ENCODE measurements at regions of chr7 and their contacts with region 1.

Region 1: GRCh38 chr7:132580717-132581285 is 4.5 kb upstream of the PLXNA4 start:
- DNase-seq: peak; percentile 76
- H3K4me3 Mint-ChIP-seq: no peak overlapping the region
- H3K27ac Mint-ChIP-seq: no peak overlapping the region
- H3K4me1 Mint-ChIP-seq: peaks cover 2% of the 10 kb centered on the region
- H3K27me3 Mint-ChIP-seq: peaks cover 31% of the 10 kb centered on the region

Region 2: DNA sequence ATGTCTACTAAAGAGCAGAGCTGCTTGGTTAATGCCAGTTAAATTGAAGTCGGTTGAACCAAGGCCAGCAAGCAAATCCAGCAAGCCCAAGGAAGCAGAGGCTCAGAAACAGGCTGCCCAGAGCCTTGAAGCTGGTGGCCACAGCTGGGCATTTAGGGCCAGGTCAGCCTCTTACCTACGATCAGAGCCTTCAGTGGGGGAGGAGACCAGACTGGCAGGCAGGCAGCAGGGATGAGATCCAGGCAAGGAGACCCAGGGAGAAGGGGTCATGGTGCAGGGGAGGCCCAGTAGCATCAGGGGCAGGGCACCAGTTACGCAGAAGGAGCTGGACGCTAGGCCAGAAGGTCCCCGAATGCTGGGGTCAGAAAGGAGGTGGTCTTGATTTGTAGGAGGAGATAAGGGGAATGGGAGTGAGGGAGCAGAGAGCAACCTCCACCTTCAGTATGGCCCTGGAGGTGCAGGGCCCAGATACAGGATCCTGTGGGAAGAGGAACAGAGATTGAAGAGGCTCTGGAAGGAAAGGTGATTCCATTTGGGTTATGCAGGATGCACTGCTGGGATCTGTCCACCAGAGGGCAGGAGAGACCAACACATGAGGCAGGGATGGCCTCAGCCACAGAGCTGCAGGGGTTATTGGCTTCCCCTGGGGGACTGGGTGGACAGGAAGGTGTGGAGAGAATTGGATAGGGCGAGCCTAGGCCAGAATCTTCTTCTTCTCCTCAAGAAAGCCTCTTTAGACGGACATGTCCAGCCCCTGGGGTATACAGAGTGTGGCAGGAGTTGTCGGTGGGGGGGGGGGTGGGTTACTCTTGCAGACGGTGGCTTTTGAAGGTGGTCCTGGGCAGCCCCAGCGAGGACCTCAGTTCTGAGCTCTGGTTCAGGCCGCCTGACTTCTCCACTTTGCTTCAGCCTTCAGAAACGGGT is 891.8 kb before region 1 on chr7:
- CTCF ChIA-PET with region 1: interaction called, 9 read pairs
- POLR2A ChIA-PET with region 1: no interaction called
- intact Hi-C with region 1: loop called (anchors 5 kb)
- DNase-seq: peak; percentile 69
- H3K4me3 Mint-ChIP-seq: no peak overlapping the region
- H3K27ac Mint-ChIP-seq: no peak overlapping the region
- H3K4me1 Mint-ChIP-seq: no peaks in the 10 kb centered on the region
- H3K27me3 Mint-ChIP-seq: peaks cover 42% of the 10 kb centered on the region

Region 3: DNA sequence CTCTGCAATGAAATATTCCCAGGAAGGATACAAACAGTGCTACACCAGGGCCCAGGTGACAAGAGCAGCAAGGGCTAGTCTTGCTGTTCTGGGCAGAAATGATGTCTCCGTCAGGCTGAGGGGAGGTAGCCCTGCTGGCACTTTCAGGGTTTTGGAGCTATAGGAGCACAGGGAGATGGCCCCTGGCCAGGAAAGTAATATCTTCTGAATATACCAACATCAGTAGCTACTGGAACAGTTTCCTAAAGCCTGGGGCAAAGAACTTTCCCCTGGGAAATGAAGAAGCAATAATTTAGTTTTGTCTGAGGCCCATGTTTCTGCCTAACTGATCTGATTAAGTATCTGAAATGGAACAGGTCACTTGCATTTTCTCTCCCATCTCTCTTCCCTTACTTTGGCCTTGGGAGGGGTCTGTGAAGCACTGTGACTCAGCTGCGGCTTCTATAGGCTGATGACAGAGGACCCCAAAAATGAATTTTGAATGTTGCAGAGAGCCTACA is 535.3 kb before region 1 on chr7:
- CTCF ChIA-PET with region 1: no interaction called
- POLR2A ChIA-PET with region 1: no interaction called
- intact Hi-C with region 1: no loop called
- DNase-seq: no peak
- H3K4me3 Mint-ChIP-seq: no peak overlapping the region
- H3K27ac Mint-ChIP-seq: no peak overlapping the region
- H3K4me1 Mint-ChIP-seq: no peaks in the 10 kb centered on the region
- H3K27me3 Mint-ChIP-seq: peaks cover 4% of the 10 kb centered on the region

Region 4: GRCh38 chr7:132394283-132395198 is 186.3 kb before region 1 on chr7:
- CTCF ChIA-PET with region 1: interaction called, 95 read pairs
- POLR2A ChIA-PET with region 1: no interaction called
- intact Hi-C with region 1: loop called (anchors 1 kb)
- DNase-seq: peak; percentile 12
- H3K4me3 Mint-ChIP-seq: no peak overlapping the region
- H3K27ac Mint-ChIP-seq: no peak overlapping the region
- H3K4me1 Mint-ChIP-seq: no peaks in the 10 kb centered on the region
- H3K27me3 Mint-ChIP-seq: no peaks in the 10 kb centered on the region

Region 5: DNA sequence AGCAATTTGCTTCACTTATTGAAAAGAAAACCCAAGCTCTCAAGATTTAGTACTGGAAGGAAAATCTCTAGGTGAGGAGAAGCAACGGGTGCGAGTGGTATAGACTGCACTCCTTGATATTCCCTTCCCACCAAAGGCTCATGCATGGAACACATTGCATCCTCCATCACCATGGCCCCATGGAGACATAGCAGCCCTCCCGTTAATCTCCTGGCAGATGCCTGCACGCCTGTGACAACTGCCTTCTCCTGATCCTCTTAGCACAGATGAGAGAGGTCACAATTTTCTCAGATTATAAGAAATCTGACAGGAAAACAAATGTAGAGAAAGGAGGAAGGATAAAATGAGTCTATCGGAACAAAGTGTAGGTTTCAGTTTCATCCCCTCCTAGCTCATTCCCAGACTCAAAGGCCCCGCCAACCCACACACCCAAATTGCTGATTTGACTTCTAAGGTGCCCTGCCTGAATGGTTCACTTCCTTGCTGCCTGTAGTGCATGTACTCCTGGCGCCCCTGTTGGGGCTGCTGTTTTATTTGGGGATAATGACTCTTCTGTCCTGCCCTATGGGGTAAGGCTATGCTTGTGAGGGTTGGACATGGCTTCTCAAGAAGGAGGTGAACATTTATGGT is 54.6 kb before region 1 on chr7:
- CTCF ChIA-PET with region 1: interaction called, 3 read pairs
- POLR2A ChIA-PET with region 1: no interaction called
- intact Hi-C with region 1: loop called (anchors 5 kb)
- DNase-seq: peak; percentile 71
- H3K4me3 Mint-ChIP-seq: no peak overlapping the region
- H3K27ac Mint-ChIP-seq: peak overlapping the region; percentile 29
- H3K4me1 Mint-ChIP-seq: peaks cover 25% of the 10 kb centered on the region
- H3K27me3 Mint-ChIP-seq: peaks cover 7% of the 10 kb centered on the region

Region 6: GRCh38 chr7:132568962-132569361 is 11.8 kb before region 1 on chr7:
- CTCF ChIA-PET with region 1: interaction called, 17 read pairs
- POLR2A ChIA-PET with region 1: no interaction called
- intact Hi-C with region 1: no loop called
- DNase-seq: no peak
- H3K4me3 Mint-ChIP-seq: no peak overlapping the region
- H3K27ac Mint-ChIP-seq: no peak overlapping the region
- H3K4me1 Mint-ChIP-seq: peaks cover 5% of the 10 kb centered on the region
- H3K27me3 Mint-ChIP-seq: peaks cover 55% of the 10 kb centered on the region

Region 7: DNA sequence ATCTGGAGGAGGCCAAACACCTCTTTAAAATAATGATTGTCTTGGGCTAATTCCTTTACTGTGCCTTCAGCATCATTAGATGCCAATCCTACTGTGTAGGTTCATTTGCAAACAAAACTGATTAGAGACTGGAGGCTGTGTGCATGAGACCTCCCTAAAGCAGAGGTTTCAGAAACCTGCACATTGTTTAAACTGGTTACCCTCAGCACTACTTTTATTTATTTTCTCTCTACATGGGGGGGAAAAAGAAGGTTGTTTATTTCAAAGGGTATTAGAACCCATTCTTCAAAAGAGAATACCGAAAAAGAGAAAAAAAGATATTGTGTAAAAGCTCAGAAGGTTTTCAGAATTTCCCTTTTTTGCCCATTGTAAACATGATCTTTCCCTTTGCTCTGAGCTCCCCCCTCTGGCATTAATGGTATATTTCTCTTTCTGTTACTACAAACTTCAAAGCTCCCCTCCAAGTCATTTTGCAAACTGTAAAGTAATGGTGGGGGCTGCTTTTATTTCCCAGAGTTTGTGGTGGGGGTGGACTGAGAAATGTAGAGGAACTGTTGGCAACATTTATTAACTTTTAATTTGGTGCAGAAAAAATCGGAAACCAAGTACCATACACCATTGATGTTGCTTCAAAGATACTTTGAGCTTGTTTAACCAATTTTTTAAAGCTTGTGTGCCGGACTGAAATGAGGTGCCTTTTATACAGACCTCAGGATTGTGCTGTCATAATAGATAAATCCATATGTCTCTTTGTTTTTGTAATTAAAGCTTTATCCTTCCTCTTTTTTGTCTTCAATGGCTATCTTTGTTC is 853.5 kb after region 1 on chr7:
- CTCF ChIA-PET with region 1: interaction called, 8 read pairs
- POLR2A ChIA-PET with region 1: no interaction called
- intact Hi-C with region 1: loop called (anchors 5 kb)
- DNase-seq: no peak
- H3K4me3 Mint-ChIP-seq: no peak overlapping the region
- H3K27ac Mint-ChIP-seq: no peak overlapping the region
- H3K4me1 Mint-ChIP-seq: no peaks in the 10 kb centered on the region
- H3K27me3 Mint-ChIP-seq: no peaks in the 10 kb centered on the region